Prostate gland (tissue), 2 donors: ENCODE measurements at regions of chr12 and their contacts with region 1.

Region 1: GRCh38 chr12:120725659-120726509 is at the start of gene ACADS:
- DNase-seq: peak; percentile 88
- H3K4me3 ChIP-seq: peak within 1 kb of the TSS; percentile 66 to 78
- H3K27ac ChIP-seq: peak within 1 kb of the TSS; percentile 51 to 74
- H3K4me1 ChIP-seq: no peaks in the 10 kb centered on the region
- H3K27me3 ChIP-seq: no peaks in the 10 kb centered on the region
- CTCF ChIP-seq: peak in 1 of 4 experiments; percentile 29
- POLR2A ChIP-seq: peak; percentile 88
- total RNA-seq, gene ACADS: 29.4 to 36.0 TPM

Region 2: DNA sequence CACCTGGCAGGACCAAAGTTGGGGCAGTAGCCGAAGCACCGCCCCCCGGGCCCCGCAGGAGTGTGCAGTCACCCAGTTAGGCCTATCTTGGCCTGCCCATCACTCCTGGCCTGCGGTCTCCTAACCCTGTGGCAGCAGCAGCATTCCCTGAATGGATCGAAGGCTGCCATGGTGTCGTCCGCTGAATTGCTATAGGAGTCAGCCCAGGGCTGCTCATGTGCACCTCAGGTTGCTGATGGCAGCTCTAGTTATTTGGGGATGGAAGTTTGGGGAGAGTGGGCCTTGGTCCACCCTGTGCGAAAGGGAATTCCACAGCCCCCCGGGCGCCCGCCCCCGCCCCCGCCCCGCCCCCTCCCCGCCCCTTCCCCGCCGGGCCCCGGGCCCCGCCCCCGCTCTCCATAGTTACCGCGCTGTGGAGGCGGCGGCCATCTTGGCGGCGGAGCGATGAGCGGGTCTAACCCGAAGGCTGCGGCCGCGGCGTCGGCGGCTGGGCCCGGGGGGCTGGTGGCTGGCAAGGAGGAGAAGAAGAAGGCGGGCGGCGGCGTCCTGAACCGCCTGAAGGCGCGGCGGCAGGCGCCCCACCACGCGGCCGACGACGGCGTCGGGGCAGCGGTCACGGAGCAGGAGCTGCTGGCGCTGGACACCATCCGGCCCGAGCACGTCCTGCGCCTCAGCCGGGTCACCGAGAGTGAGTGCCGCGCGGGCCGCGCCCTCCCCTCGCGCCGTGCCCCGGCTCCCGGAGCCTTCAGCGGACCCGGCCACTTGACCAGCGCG is 15.7 kb before region 1 on chr12 and contains the start of gene UNC119B:
- intact Hi-C with region 1: no loop called
- DNase-seq: peak; percentile 62
- H3K4me3 ChIP-seq: peak within 1 kb of the TSS; percentile 94 to 97
- H3K27ac ChIP-seq: peak within 1 kb of the TSS; percentile 92 to 94
- H3K4me1 ChIP-seq: no peaks in the 10 kb centered on the region
- H3K27me3 ChIP-seq: no peaks in the 10 kb centered on the region
- CTCF ChIP-seq: no peak
- POLR2A ChIP-seq: peak; percentile 41
- total RNA-seq, gene UNC119B: 26.0 to 41.9 TPM

Region 3: DNA sequence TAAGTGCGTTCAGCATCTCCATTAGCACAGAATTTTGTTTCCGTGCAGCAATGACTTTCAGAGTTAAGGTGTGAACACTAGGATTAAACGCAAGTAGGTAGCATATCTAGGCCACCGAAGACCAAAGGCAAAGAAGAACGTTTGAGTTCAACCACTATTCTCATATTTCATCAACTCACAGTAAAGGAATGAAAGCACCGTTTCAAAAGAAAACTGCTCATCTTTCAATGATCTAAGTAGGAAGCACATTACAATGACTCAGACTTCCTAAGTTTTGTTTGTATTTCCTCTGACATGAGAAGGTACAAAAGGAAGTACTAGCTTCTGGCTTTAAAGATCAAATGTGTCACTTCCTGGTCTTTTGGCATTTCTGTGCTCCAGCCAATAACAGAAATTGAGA is 57.3 kb after region 1 on chr12:
- intact Hi-C with region 1: no loop called
- DNase-seq: no peak
- H3K4me3 ChIP-seq: no peak overlapping the region
- H3K27ac ChIP-seq: no peak overlapping the region
- H3K4me1 ChIP-seq: no peaks in the 10 kb centered on the region
- H3K27me3 ChIP-seq: no peaks in the 10 kb centered on the region
- CTCF ChIP-seq: no peak
- POLR2A ChIP-seq: no peak

Region 4: DNA sequence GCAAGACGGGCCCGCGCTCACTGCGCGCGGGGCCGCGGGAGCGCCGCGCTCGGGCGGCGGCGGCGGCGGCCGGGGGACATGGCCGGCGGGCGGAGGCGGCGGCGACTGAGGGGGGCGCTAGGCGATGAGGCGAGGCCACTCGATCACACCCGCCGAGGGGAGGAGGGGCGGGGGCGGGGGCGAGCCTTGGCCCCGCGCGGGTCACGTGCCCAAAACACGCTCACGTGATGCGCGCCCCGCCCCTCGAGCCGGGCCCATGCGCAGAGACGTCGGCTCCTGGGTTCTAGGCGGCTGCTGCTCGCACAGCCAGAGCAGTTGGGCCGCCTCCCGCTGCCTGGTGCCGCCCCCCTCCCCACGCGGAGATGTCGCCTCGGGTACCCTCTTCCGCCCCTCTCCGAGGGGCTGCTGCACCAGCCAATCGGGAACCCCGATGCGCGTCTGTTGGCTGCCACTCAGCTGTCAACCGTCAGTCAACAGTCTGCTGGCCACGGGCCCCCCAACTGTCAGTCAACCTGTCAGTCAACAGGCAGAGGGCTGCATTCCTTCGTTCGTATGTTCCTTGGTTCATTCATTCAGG is 178.4 kb after region 1 on chr12 and contains the start of gene SPPL3:
- intact Hi-C with region 1: loop called (anchors 10 kb)
- DNase-seq: peak; percentile 88
- H3K4me3 ChIP-seq: peak within 1 kb of the TSS; percentile 98 to 99
- H3K27ac ChIP-seq: peak within 1 kb of the TSS; percentile 79 to 88
- H3K4me1 ChIP-seq: no peaks in the 10 kb centered on the region
- H3K27me3 ChIP-seq: no peaks in the 10 kb centered on the region
- CTCF ChIP-seq: peak in 1 of 4 experiments; percentile 32
- POLR2A ChIP-seq: peak; percentile 69
- total RNA-seq, gene SPPL3: 36.0 to 37.1 TPM

Region 5: DNA sequence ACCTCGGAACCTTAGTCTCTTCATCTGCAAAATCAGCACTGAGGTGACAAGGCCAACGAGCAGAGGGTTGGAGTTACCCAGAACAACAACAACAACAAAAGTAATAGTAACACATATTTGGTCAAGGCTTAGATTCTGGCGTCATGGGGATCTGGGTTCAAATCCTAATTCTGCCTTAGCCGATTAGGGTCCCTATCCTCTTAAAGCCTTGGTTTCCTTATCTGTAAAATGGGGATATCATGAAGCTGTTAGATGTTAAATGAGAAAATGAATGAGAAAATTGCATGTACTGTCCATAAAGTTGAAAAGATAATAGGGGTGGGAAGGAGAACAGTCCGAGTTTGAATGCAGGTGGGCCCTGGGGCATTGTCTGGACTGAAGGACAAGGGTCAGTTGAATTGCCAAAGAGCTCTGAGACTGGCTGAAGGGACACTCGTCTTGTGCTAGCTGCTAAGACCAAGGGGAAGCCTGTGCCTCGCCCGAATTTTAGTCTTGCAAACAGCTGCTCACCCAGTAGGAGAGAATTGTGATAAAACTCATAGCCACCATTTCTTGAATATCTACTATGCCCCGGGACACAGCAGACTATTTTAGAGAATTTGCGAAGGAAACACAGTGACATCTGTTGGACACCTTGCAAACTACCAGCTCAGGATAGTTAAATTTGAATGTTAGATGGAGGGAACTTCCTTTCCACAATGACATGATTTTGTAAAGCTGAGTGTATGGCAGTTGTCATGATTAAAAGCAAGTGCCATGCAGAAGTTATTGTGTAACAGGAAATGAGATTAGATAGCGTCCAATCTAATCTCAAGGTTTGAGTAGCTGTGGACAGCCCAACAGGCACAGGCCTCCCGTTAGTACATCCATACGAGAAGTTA is 245.7 kb after region 1 on chr12:
- intact Hi-C with region 1: loop called (anchors 5 kb)
- DNase-seq: peak; percentile 28
- H3K4me3 ChIP-seq: no peak overlapping the region
- H3K27ac ChIP-seq: no peak overlapping the region
- H3K4me1 ChIP-seq: no peaks in the 10 kb centered on the region
- H3K27me3 ChIP-seq: no peaks in the 10 kb centered on the region
- CTCF ChIP-seq: peak; percentile 19 to 78 (median 62)
- POLR2A ChIP-seq: no peak